ENCODE measurements at regions of chr2 and their contacts with region 1.

Region 1: DNA sequence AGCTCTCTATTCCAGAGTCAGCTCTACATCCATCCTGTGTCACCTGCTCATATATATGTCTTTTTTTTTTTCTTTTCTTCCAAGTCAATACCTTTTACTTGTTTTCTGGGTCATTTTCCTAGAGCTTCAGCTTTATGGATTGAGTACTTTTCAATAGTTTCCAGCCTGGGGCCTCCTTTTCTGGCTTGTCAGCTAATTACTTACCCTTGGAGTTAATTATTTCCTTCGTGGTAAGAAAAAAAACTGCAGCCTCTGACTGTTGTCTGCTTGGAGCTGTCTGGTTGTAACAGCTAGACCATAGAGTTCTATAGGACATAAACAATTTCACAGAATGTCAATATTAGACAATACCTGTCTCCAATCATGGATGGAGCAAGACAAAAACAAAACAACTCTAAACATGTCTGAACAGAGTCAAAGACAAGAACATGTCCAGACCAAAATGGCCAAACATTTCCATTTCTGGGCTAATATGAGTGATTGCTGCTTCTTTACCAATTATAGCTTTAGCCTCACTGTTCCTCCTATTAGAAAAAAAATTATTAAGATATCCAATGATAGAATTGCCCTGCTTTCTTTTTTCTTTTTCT is 643.1 kb downstream of the SLC4A3 start:
- DNase-seq: no peak
- H3K4me3 Mint-ChIP-seq: no peak overlapping the region
- H3K27ac Mint-ChIP-seq: no peak overlapping the region
- H3K4me1 Mint-ChIP-seq: peaks cover 21% of the 10 kb centered on the region
- H3K27me3 Mint-ChIP-seq: no peaks in the 10 kb centered on the region
- CTCF ChIP-seq: no peak

Region 2: GRCh38 chr2:220188031-220188430 is 82.5 kb before region 1 on chr2:
- CTCF ChIA-PET with region 1: no interaction called
- intact Hi-C with region 1: loop called (anchors 5 kb)
- DNase-seq: peak; percentile 70
- H3K4me3 Mint-ChIP-seq: peak overlapping the region; percentile 33
- H3K27ac Mint-ChIP-seq: peak overlapping the region; percentile 93
- H3K4me1 Mint-ChIP-seq: peaks cover 41% of the 10 kb centered on the region
- H3K27me3 Mint-ChIP-seq: no peaks in the 10 kb centered on the region
- CTCF ChIP-seq: no peak

Region 3: GRCh38 chr2:220296174-220296573 is 25.6 kb after region 1 on chr2:
- CTCF ChIA-PET with region 1: no interaction called
- intact Hi-C with region 1: no loop called
- DNase-seq: no peak
- H3K4me3 Mint-ChIP-seq: no peak overlapping the region
- H3K27ac Mint-ChIP-seq: no peak overlapping the region
- H3K4me1 Mint-ChIP-seq: no peaks in the 10 kb centered on the region
- H3K27me3 Mint-ChIP-seq: no peaks in the 10 kb centered on the region
- CTCF ChIP-seq: no peak